Activated CD4-positive, alpha-beta T cell treated with anti-CD3 and anti-CD28 coated beads, Interleukin-2, amount 10 ng/mL, durations not matched to agents 7 days and 5 days (primary cell): ENCODE measurements at regions of chr12 and their contacts with region 1.

Region 1: DNA sequence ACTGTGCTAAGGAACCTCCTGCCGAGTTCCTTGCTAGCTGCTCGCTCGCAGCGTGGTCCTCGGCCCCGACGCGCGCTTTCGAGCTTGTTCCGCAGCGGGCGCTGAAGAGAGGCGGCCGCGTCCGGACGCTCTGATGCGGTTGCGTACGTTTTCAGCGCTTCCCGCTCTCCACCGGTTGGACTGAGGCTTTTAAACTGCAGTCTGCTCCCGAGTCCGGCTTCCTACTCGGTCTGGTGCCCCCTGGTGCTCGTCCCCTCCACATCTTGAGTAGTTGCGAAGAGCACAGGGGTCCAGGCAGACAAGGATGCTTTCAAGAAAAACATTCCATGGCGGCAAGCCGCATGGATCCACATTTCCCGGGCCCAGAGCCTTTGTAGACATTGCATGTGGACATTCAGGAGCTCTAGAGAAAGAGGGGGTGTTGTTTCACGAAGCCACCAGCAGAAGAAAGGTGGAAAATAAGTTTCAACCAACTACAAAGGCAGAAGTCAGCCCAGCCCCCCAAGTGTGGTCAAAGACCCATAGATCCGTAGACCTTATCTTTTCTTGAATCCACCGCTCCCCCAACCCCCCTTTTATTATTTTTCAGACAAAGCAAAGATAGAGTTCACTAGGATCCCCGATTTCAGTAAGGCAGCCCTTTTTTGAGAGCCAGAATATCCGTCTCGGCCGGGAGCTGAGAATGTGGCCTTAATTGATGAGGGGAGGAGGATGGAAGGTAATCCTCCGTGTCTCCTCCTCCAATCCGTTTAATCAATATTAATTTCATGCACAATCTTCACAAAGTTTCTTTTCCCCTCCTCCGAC is 984 bp upstream of the WNK1 start:
- DNase-seq: peak; percentile 89
- H3K4me3 Mint-ChIP-seq: no peak overlapping the region
- H3K27ac Mint-ChIP-seq: no peak overlapping the region
- H3K4me1 Mint-ChIP-seq: peaks cover 21% of the 10 kb centered on the region
- H3K27me3 Mint-ChIP-seq: no peaks in the 10 kb centered on the region

Region 2: DNA sequence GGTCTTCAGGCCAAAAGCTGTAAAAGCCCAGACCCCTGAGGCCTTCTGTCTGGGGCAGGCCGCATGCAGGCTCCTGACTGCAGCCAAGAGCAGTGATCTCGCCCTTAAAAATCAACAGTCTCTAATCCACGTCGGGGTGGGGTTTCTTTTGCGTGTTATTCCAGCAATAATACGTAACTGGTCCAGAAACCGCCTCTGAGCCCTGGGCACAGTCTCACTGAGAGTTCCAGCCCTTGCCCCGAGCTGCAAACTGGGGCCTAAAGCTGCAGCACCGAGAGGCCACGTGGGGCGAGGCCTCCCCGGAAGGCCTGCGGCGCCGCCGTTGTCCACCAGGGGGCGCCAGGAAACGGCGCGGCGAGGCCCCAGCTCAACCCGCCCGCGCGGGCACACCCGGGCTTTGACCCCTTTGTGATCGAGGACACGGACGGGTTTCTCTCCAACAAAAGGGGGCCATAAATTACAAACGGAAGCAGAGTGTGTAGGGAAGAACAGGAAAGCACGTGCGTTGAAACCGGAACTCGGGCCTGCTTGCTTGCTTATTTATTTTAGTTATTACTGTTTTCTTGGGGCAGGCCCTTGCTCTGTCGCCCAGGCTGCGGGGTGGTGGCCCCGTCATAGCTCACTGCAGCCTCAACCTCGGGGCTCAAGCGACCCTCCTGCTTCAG is 175.3 kb before region 1 on chr12:
- CTCF ChIA-PET with region 1: interaction called, 91 read pairs
- POLR2A ChIA-PET with region 1: interaction called, 3 read pairs
- DNase-seq: peak; percentile 80
- H3K4me3 Mint-ChIP-seq: no peak overlapping the region
- H3K27ac Mint-ChIP-seq: peak overlapping the region; percentile 80
- H3K4me1 Mint-ChIP-seq: peaks cover 48% of the 10 kb centered on the region
- H3K27me3 Mint-ChIP-seq: no peaks in the 10 kb centered on the region

Region 3: DNA sequence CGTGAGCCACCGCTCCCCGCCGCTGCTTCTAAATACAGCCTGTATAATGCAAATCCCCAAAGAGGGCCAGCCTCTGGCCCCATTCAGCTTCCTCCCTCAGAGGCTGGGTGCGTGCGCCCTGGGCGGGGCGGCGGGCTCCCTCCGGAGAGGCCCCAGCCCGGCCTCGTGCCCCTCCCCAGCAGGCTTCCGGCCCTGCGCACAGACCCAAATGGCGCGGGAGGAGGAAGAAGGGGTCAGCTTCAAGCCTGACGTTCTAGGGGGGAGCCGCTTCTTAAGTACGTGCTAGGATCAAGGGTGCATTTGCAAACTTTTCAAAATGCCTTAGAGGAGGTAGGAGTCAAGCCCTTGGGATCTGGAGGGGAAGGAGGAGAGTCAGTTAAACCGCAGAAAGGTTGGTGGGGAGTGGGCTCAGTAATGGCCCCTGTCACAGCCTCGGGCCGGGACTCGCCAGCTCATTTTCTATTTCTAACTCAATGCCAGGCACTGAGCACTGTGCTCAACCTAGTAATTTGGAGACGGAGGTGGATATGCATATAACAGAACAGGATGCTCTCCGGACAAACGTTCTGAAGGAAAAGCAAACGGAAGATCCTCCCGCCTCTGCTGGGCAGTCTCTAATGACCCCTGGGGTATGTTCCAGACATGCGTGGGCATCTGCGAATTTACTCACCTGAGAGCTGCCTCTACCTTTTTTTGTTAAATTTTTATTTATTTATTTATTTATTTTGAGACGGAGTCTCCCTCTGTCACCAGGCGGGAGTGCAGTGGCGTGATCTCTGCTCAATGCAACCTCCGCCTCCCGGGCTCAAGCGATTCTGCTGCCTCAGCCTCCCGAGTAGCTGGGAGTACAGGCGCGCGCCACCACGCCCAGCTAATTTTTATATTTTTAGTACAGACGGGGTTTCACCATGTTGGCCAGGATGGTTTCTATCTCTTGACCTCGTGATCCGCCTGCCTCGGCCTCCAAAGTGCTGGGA is 120.5 kb before region 1 on chr12:
- CTCF ChIA-PET with region 1: interaction called, 11 read pairs
- POLR2A ChIA-PET with region 1: interaction called, 11 read pairs
- DNase-seq: peak; percentile 88
- H3K4me3 Mint-ChIP-seq: peak overlapping the region; percentile 88
- H3K27ac Mint-ChIP-seq: peak overlapping the region; percentile 98
- H3K4me1 Mint-ChIP-seq: peaks cover 51% of the 10 kb centered on the region
- H3K27me3 Mint-ChIP-seq: no peaks in the 10 kb centered on the region

Region 4: GRCh38 chr12:666766-667308 is 84.6 kb before region 1 on chr12:
- CTCF ChIA-PET with region 1: interaction called, 11 read pairs
- POLR2A ChIA-PET with region 1: no interaction called
- DNase-seq: no peak
- H3K4me3 Mint-ChIP-seq: no peak overlapping the region
- H3K27ac Mint-ChIP-seq: peak overlapping the region; percentile 43
- H3K4me1 Mint-ChIP-seq: peaks cover 69% of the 10 kb centered on the region
- H3K27me3 Mint-ChIP-seq: no peaks in the 10 kb centered on the region

Region 5: DNA sequence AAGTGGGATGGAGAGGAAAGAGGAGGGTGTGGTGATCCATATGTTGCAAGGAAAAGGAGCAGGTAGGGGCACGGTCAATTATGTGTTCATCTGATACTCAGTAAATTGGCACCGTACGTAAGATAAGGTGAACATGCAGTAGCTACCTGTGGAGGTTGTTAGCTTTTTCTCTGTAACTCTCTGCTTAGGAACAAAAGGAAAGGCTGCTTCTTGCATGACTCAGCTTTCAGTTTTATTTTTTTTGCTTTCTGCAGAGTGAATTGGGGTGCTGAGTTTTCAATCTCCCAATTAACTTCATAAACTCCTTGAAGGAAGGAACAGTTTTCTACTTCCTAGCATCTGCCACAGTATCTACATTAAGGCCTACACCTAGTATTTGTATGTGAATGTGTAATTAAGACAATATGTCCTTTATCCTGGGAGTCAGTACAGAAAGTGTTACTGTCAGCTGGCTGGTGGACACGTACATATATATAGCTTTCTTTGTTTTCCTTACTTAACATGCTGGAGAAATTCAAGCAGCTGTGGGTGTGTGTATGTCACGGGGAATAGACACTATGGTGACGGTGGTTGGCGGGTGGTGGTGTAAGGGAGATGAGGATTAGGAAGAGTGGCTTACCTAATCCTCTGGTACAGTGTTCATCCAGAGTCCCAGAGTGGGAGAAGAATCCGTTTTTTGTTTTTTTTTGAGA is 39.1 kb before region 1 on chr12:
- CTCF ChIA-PET with region 1: interaction called, 10 read pairs
- POLR2A ChIA-PET with region 1: no interaction called
- DNase-seq: no peak
- H3K4me3 Mint-ChIP-seq: no peak overlapping the region
- H3K27ac Mint-ChIP-seq: no peak overlapping the region
- H3K4me1 Mint-ChIP-seq: peaks cover 24% of the 10 kb centered on the region
- H3K27me3 Mint-ChIP-seq: no peaks in the 10 kb centered on the region

Region 6: GRCh38 chr12:737122-737739 is 14.2 kb before region 1 on chr12:
- CTCF ChIA-PET with region 1: interaction called, 62 read pairs
- POLR2A ChIA-PET with region 1: no interaction called
- DNase-seq: no peak
- H3K4me3 Mint-ChIP-seq: no peak overlapping the region
- H3K27ac Mint-ChIP-seq: no peak overlapping the region
- H3K4me1 Mint-ChIP-seq: peaks cover 7% of the 10 kb centered on the region
- H3K27me3 Mint-ChIP-seq: peaks cover 2% of the 10 kb centered on the region

Region 7: GRCh38 chr12:905261-906031 is 154.1 kb after region 1 on chr12:
- CTCF ChIA-PET with region 1: no interaction called
- POLR2A ChIA-PET with region 1: no interaction called
- DNase-seq: peak; percentile 28
- H3K4me3 Mint-ChIP-seq: peak overlapping the region; percentile 8
- H3K27ac Mint-ChIP-seq: peak overlapping the region; percentile 61
- H3K4me1 Mint-ChIP-seq: peaks cover 40% of the 10 kb centered on the region
- H3K27me3 Mint-ChIP-seq: no peaks in the 10 kb centered on the region

Region 8: GRCh38 chr12:936377-937345 is 185.3 kb after region 1 on chr12:
- CTCF ChIA-PET with region 1: no interaction called
- POLR2A ChIA-PET with region 1: no interaction called
- DNase-seq: no peak
- H3K4me3 Mint-ChIP-seq: no peak overlapping the region
- H3K27ac Mint-ChIP-seq: no peak overlapping the region
- H3K4me1 Mint-ChIP-seq: peaks cover 10% of the 10 kb centered on the region
- H3K27me3 Mint-ChIP-seq: no peaks in the 10 kb centered on the region